Heart left ventricle (tissue), 16 donors: ENCODE measurements at regions of chr7 and their contacts with region 1.

Region 1: DNA sequence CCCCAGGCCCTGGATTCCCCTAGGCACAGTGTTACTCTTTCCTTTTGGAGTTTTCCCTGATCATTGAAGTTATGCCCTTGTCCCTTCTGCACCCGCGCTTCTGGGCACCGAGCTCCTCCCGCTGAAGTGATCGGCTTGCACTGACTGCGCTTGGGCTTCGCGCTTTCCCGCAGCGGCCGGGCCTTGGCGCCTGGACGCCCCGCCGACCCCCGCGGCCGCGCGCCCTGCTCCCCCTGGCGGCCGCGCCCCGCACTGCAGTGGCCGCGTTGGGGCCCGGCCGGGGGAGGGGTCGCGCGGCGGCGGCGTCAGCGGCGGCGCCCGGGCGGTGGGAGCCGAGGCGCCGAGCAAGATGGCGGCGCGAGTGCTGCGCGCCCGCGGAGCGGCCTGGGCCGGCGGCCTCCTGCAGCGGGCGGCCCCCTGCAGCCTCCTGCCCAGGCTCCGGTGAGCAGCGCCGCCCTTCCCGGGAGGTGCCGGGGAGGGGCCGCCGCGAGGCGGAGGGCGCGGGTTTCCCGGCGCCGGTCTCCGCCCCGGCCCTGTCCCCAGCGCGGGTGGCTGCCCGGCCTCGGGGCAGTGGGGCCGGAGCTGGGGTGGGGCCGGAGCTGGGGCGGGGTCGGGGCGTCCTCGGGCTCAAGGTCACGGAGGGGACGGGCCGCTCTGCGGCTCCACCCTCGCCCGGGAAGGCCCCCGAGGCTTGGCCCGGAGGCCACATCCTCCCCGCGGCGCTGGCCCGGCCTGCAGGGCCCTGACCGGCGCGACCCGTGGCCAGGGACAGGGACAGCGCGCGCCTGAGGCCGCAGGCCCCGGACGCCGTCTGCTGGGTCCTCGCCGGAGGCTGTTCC is at the start of gene NIPSNAP2:
- DNase-seq: peak; percentile 90 to 95 (median 91)
- ATAC-seq: peak; percentile 87 to 97 (median 94)
- H3K4me3 ChIP-seq: peak within 1 kb of the TSS; percentile 45 to 84 (median 69)
- H3K27ac ChIP-seq: peak within 1 kb of the TSS; percentile 86 to 99 (median 96)
- H3K4me1 ChIP-seq: peaks cover 0 to 48% (median 17%) of the 10 kb centered on the region in 12 donors
- H3K27me3 ChIP-seq: no peaks in the 10 kb centered on the region
- CTCF ChIP-seq: peak; percentile 12 to 70 (median 50)
- POLR2A ChIP-seq: peak in 1 of 2 donors; percentile 86
- total RNA-seq, gene NIPSNAP2: 184 to 529 (median 329) TPM

Region 2: DNA sequence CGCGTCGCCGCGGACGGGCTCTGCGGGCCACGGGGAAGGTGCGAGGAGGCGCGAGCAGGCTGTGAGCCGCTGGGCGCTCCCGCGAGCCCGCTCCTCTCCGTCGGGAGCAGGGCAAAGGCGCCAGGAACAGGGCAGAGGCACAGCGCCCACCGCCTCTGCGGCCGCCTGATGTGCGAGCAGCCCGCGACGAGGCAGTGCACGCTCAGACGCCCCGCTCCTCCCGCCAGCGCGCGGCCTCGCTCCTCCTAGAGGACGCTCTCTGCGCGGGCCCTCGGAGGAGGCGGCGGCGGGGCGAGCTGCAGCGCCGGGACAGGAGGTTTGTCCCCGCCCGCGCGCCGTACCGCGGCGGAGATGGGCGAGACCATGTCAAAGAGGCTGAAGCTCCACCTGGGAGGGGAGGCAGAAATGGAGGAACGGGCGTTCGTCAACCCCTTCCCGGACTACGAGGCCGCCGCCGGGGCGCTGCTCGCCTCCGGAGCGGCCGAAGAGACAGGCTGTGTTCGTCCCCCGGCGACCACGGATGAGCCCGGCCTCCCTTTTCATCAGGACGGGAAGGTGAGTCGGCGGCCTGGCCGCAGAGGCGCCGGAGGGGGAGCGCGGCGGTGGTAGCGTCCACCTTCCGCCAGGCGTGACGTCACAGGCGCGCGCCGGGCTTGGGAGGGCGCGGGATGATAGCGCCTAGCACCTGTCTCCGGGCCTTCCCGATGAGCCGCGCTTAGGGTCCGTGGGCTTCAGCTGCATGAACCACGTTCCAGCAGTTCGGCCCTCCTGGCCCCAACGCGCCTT is 598.6 kb before region 1 on chr7:
- intact Hi-C with region 1: loop called in 1 of 10 experiments (anchors 10 kb)
- DNase-seq: peak; percentile 96 to 98 (median 97)
- ATAC-seq: peak; percentile 97 to 99 (median 99)
- H3K4me3 ChIP-seq: peak overlapping the region; percentile 73 to 100 (median 96)
- H3K27ac ChIP-seq: peak overlapping the region; percentile 95 to 100 (median 100)
- H3K4me1 ChIP-seq: peaks cover 0 to 21% (median 15%) of the 10 kb centered on the region in 12 donors
- H3K27me3 ChIP-seq: no peaks in the 10 kb centered on the region
- CTCF ChIP-seq: peak in 10 of 12 donors; percentile 5 to 52 (median 26)
- POLR2A ChIP-seq: peak in 1 of 2 donors; percentile 65

Region 3: GRCh38 chr7:55641273-55641691 is 323.2 kb before region 1 on chr7:
- intact Hi-C with region 1: loop called in 6 of 10 experiments (anchors 1 to 10 kb)
- DNase-seq: peak in 3 of 5 donors; percentile 27 to 42 (median 30)
- ATAC-seq: peak; percentile 80 to 95 (median 91)
- H3K4me3 ChIP-seq: no peak overlapping the region
- H3K27ac ChIP-seq: no peak overlapping the region
- H3K4me1 ChIP-seq: peaks cover 0 to 7% (median 0%) of the 10 kb centered on the region in 12 donors
- H3K27me3 ChIP-seq: peaks cover 0 to 2% (median 0%) of the 10 kb centered on the region in 9 donors
- CTCF ChIP-seq: peak; percentile 61 to 85 (median 77)
- POLR2A ChIP-seq: no peak

Region 4: GRCh38 chr7:55898287-55898686 is 66.2 kb before region 1 on chr7:
- intact Hi-C with region 1: loop called in 1 of 10 experiments (anchors 5 kb)
- DNase-seq: no peak
- ATAC-seq: no peak
- H3K4me3 ChIP-seq: no peak overlapping the region
- H3K27ac ChIP-seq: no peak overlapping the region
- H3K4me1 ChIP-seq: no peaks in the 10 kb centered on the region
- H3K27me3 ChIP-seq: no peaks in the 10 kb centered on the region
- CTCF ChIP-seq: no peak
- POLR2A ChIP-seq: no peak

Region 5: DNA sequence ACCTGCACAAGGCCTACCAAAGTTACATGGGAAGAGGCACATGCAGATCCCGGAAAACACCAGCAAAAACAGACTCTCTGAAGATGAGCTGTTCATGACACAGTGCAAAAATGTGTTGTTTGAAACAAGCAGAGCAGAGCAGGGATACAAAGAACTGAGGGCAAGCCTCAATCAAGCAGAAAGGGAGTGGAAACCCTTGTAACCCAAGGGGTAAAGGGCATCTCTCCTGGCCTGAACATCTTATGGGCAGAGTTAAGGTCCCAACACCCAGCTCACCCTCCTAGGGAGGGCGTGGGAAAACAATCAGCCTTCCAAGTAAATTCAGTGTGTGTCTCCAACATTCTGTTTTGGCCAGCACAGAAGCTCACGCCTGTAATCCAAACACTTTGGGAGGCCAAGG is 76.3 kb after region 1 on chr7:
- intact Hi-C with region 1: no loop called
- DNase-seq: no peak
- ATAC-seq: no peak
- H3K4me3 ChIP-seq: no peak overlapping the region
- H3K27ac ChIP-seq: no peak overlapping the region
- H3K4me1 ChIP-seq: no peaks in the 10 kb centered on the region
- H3K27me3 ChIP-seq: no peaks in the 10 kb centered on the region
- CTCF ChIP-seq: no peak
- POLR2A ChIP-seq: no peak

Region 6: DNA sequence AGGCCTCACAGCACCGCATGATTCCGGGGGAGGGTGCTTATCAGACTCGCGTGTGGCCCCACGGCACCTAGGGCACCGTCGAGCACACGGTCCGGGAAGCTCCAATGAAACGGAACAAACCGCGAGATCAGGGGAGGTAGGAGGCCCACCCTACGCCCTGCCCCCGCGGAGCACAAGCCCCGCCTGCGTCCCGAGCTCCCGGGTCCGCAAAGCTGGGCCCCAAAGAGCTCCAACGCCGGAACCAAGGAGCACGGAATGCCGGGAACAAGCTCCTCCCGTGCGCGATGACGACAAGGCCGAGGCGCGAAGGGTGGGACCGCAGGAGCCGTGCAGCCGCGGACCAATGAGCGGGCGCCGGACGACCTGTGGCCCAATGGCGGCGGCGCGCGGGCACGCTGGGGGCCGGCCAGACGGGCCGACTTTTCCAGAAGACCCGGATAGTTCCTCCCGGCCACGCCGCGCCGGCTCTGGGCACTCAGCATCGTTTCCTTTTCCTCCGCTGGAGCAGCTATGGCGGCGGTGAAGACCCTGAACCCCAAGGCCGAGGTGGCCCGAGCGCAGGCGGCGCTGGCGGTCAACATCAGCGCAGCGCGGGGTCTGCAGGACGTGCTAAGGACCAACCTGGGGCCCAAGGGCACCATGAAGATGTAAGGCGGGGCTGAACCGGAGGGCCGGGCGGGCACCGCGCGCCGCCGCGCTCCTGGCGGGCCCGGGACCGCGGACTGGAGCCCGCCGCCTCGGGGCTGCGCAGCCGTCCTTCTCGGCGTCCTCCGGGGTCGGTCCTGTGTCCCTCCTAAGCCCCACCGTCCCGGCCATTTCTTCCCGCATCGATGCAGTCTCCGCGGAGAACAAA is 87.1 kb after region 1 on chr7 and contains the starts of genes CCT6A and PSPH:
- intact Hi-C with region 1: loop called in 1 of 10 experiments (anchors 2 kb)
- DNase-seq: peak; percentile 98 to 99 (median 99)
- ATAC-seq: peak; percentile 98 to 100 (median 100)
- H3K4me3 ChIP-seq: peak within 1 kb of the TSS; percentile 50 to 96 (median 82)
- H3K27ac ChIP-seq: peak within 1 kb of the TSS; percentile 80 to 96 (median 92)
- H3K4me1 ChIP-seq: peaks cover 7 to 45% (median 26%) of the 10 kb centered on the region in 12 donors
- H3K27me3 ChIP-seq: no peaks in the 10 kb centered on the region
- CTCF ChIP-seq: no peak
- POLR2A ChIP-seq: peak; percentile 23 to 81
- total RNA-seq, gene CCT6A: 44.6 to 85.8 (median 62.6) TPM
- total RNA-seq, gene PSPH: 7.5 to 15.9 (median 8.9) TPM

Region 7: GRCh38 chr7:56074371-56074791 is 109.9 kb after region 1 on chr7:
- intact Hi-C with region 1: loop called in 2 of 10 experiments (anchors 10 kb)
- DNase-seq: peak; percentile 84 to 94 (median 87)
- ATAC-seq: peak; percentile 90 to 95 (median 94)
- H3K4me3 ChIP-seq: no peak overlapping the region
- H3K27ac ChIP-seq: peak overlapping the region in 4 of 12 donors; percentile 4 to 71 (median 51)
- H3K4me1 ChIP-seq: peaks cover 5 to 18% (median 14%) of the 10 kb centered on the region in 12 donors
- H3K27me3 ChIP-seq: no peaks in the 10 kb centered on the region
- CTCF ChIP-seq: peak; percentile 80 to 96 (median 94)
- POLR2A ChIP-seq: peak in 1 of 2 donors; percentile 36